ENCODE measurements at regions of chr1 and their contacts with region 1.

Region 1: GRCh38 chr1:67853704-67854103 is 20.4 kb upstream of the GNG12 start:
- DNase-seq: peak; percentile 49
- ATAC-seq: no peak
- H3K4me3 Mint-ChIP-seq: no peak overlapping the region
- H3K27ac Mint-ChIP-seq: no peak overlapping the region
- H3K4me1 Mint-ChIP-seq: no peaks in the 10 kb centered on the region
- H3K27me3 Mint-ChIP-seq: peaks cover 13% of the 10 kb centered on the region
- CTCF ChIP-seq: peak; percentile 23

Region 2: GRCh38 chr1:67664048-67664447 is 189.7 kb before region 1 on chr1:
- CTCF ChIA-PET with region 1: no interaction called
- POLR2A ChIA-PET with region 1: no interaction called
- intact Hi-C with region 1: no loop called
- DNase-seq: no peak
- ATAC-seq: no peak
- H3K4me3 Mint-ChIP-seq: no peak overlapping the region
- H3K27ac Mint-ChIP-seq: no peak overlapping the region
- H3K4me1 Mint-ChIP-seq: no peaks in the 10 kb centered on the region
- H3K27me3 Mint-ChIP-seq: peaks cover 15% of the 10 kb centered on the region
- CTCF ChIP-seq: no peak

Region 3: GRCh38 chr1:67791686-67792475 is 61.8 kb before region 1 on chr1:
- CTCF ChIA-PET with region 1: no interaction called
- POLR2A ChIA-PET with region 1: no interaction called
- intact Hi-C with region 1: no loop called
- DNase-seq: no peak
- ATAC-seq: no peak
- H3K4me3 Mint-ChIP-seq: no peak overlapping the region
- H3K27ac Mint-ChIP-seq: no peak overlapping the region
- H3K4me1 Mint-ChIP-seq: no peaks in the 10 kb centered on the region
- H3K27me3 Mint-ChIP-seq: peaks cover 2% of the 10 kb centered on the region
- CTCF ChIP-seq: no peak

Region 4: GRCh38 chr1:67945733-67946374 is 92.2 kb after region 1 on chr1:
- CTCF ChIA-PET with region 1: no interaction called
- POLR2A ChIA-PET with region 1: no interaction called
- intact Hi-C with region 1: no loop called
- DNase-seq: no peak
- ATAC-seq: no peak
- H3K4me3 Mint-ChIP-seq: no peak overlapping the region
- H3K27ac Mint-ChIP-seq: no peak overlapping the region
- H3K4me1 Mint-ChIP-seq: no peaks in the 10 kb centered on the region
- H3K27me3 Mint-ChIP-seq: peaks cover 2% of the 10 kb centered on the region
- CTCF ChIP-seq: no peak

Region 5: GRCh38 chr1:68010090-68010489 is 156.4 kb after region 1 on chr1:
- CTCF ChIA-PET with region 1: interaction called, 4 read pairs
- POLR2A ChIA-PET with region 1: no interaction called
- intact Hi-C with region 1: loop called (anchors 10 kb)
- DNase-seq: no peak
- ATAC-seq: no peak
- H3K4me3 Mint-ChIP-seq: no peak overlapping the region
- H3K27ac Mint-ChIP-seq: no peak overlapping the region
- H3K4me1 Mint-ChIP-seq: no peaks in the 10 kb centered on the region
- H3K27me3 Mint-ChIP-seq: peaks cover 5% of the 10 kb centered on the region
- CTCF ChIP-seq: no peak

Region 6: DNA sequence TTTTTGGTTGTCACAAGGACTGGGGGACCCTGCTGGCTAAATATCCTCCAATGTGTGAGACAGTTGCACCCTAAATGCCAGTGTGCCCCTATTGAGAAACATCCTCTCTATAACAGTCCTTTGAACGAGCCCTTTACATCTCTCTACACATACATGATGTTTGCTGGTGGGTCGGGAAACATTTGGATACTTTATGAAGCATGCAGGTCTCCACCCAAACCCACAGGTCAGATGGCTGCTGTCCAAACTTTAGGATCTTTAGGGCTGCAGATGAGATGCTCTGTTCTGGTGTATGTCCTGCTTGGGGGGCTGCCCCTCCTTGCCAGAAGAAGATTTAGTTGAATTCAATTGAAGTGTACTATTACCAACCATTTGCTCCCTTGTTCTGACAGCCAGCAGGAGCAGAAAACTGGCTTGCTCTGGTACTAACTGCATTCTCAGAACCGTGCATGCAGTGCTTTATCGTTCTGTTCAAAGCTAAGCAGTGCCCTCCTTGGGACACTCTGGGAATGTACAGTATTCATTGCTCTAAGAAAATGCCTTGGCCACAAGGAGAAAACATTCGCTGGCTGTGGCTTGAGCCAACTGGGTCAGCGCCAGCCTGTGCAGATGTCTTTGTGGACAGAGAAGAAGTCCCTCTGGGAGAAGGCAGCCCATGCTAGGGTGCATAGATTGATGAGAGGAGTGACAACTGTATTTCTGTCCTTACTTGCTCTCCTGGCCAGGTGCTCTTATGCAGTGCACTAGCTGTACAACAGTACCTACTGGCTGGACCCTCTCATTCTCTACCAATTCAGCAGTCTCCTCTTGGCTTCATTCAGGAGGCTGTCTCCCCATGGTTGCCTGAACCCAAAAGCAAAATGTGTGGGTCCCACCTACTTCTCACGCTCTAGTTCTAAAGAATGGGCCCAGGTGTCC is 258.1 kb after region 1 on chr1:
- CTCF ChIA-PET with region 1: interaction called, 11 read pairs
- POLR2A ChIA-PET with region 1: no interaction called
- intact Hi-C with region 1: loop called (anchors 5 kb)
- DNase-seq: no peak
- ATAC-seq: no peak
- H3K4me3 Mint-ChIP-seq: no peak overlapping the region
- H3K27ac Mint-ChIP-seq: no peak overlapping the region
- H3K4me1 Mint-ChIP-seq: no peaks in the 10 kb centered on the region
- H3K27me3 Mint-ChIP-seq: no peaks in the 10 kb centered on the region
- CTCF ChIP-seq: no peak